GM12878 (cell line): ENCODE measurements at regions of chr7 and their contacts with region 1.

Region 1: GRCh38 chr7:100691676-100692577 is 2.1 kb downstream of the GIGYF1 start:
- DNase-seq: no peak
- ATAC-seq: peak; percentile 87
- H3K4me3 ChIP-seq: peak overlapping the region; percentile 95
- H3K27ac ChIP-seq: peak overlapping the region; percentile 74; the same call in 1 of the 2 replicates
- H3K4me1 ChIP-seq: peaks cover 41% of the 10 kb centered on the region
- H3K27me3 ChIP-seq: no peaks in the 10 kb centered on the region
- CTCF ChIP-seq: peak; percentile 85 to 90 (median 88)
- EP300 ChIP-seq: no peak
- POLR2A ChIP-seq: no peak
- RAD21 ChIP-seq: peak; percentile 83

Region 2: DNA sequence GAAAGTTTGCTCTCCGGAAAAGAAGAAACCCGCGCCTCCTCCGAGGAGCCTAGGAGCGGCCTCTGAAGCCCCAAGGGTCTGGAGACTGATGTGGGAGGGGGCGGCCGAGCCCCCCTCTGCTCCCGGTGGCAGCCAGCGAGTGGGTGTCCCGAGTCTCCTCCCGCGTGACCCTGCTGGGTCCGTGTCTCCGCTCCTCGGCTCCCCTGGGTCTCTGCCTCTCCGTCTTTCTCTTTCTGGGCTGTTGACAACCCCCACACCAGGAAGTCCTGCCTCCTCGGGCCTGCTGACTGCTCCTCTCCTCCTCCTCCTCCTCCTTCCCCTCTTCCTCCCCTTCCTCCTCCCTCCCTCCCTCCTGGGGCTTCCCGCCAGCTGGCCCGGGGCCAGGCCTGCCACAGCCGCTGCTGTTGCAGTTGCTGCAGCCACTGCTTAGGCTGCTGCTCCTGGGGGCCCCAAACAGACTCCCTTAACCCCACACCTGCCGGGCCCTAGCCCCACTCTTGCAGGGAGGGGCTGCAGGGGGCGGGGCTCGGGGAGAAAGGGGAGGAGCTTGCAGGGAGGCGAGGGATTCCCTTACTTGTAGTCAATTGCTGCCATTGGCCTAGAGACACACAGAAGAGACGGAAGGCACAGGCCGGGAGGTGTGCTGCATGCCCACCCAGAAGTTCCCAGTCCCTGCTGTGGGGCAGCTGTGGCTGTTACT is 212.8 kb before region 1 on chr7 and contains the start of gene TSC22D4:
- CTCF ChIA-PET with region 1: interaction called, 4 read pairs
- POLR2A ChIA-PET with region 1: no interaction called
- RAD21 ChIA-PET with region 1: interaction called, 3 read pairs
- SMC1A ChIA-PET with region 1: no interaction called
- in situ Hi-C with region 1: loop called (anchors 25 kb)
- intact Hi-C with region 1: loop called (anchors 10 kb)
- DNase-seq: peak; percentile 79
- ATAC-seq: peak; percentile 85
- H3K4me3 ChIP-seq: peak within 1 kb of the TSS; percentile 99
- H3K27ac ChIP-seq: peak within 1 kb of the TSS; percentile 89
- H3K4me1 ChIP-seq: peaks cover 27% of the 10 kb centered on the region
- H3K27me3 ChIP-seq: no peaks in the 10 kb centered on the region
- CTCF ChIP-seq: no peak
- EP300 ChIP-seq: no peak
- POLR2A ChIP-seq: peak; percentile 87
- RAD21 ChIP-seq: no peak
- polyA plus RNA-seq, gene TSC22D4: 0.50 to 1.2 TPM

Region 3: DNA sequence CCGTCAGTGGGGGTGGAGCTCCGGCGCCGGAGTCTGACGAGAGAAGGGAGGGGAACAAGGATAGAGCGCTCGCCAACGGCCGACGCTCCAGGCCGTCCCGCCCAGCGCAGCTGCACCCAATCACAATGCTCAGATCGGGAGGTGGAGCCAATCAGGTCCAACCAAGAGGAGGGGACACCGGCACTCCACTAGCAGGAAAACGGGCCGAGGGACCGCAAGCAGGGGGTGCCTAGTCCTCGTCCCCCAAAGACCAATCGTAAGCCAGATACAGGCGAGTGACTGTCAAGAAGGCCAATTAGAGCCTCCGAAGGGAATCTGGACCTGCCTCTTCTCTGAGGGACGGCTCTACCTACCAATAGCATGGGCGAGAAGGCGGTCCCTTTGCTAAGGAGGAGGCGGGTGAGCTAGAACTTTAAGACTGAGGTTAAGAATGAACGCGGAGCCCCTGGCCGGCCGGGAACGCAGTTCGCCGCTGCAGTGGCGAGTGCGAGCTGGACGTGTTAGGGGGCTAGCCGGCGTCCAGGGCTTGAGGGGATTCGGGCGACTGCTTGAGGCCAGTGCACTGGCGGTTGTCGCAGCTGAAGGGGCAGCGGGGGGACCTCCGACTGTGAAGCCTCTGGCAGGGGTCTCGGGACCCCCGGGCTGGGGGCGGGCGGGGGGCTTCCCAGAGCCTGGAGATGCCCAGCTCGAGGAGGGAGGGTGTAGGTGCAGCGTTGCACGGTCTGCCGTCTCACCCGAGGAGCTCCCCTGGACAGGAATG is 105.5 kb before region 1 on chr7 and contains the start of gene FBXO24:
- CTCF ChIA-PET with region 1: interaction called, 41 read pairs
- POLR2A ChIA-PET with region 1: interaction called, 6 read pairs
- RAD21 ChIA-PET with region 1: interaction called, 15 read pairs
- SMC1A ChIA-PET with region 1: interaction called, 13 read pairs
- in situ Hi-C with region 1: no loop called
- intact Hi-C with region 1: loop called (anchors 1 kb)
- DNase-seq: peak; percentile 100
- ATAC-seq: peak; percentile 90
- H3K4me3 ChIP-seq: peak within 1 kb of the TSS; percentile 83
- H3K27ac ChIP-seq: peak within 1 kb of the TSS; percentile 88
- H3K4me1 ChIP-seq: peaks cover 24% of the 10 kb centered on the region
- H3K27me3 ChIP-seq: no peaks in the 10 kb centered on the region
- CTCF ChIP-seq: no peak
- EP300 ChIP-seq: 0 out of 4 replicates have a peak, but pooled peaks of 1 of the 2 experiments have one; percentile 3
- POLR2A ChIP-seq: peak; percentile 53; the same call in 1 of the 2 replicates
- RAD21 ChIP-seq: no peak
- polyA plus RNA-seq, gene FBXO24: not detected

Region 4: GRCh38 chr7:100632951-100633717 is 58.8 kb before region 1 on chr7:
- CTCF ChIA-PET with region 1: interaction called, 46 read pairs
- POLR2A ChIA-PET with region 1: no interaction called
- RAD21 ChIA-PET with region 1: interaction called, 3 read pairs
- SMC1A ChIA-PET with region 1: interaction called, 5 read pairs
- in situ Hi-C with region 1: no loop called
- intact Hi-C with region 1: loop called (anchors 5 kb)
- DNase-seq: no peak
- ATAC-seq: peak; percentile 84
- H3K4me3 ChIP-seq: peak overlapping the region; percentile 76
- H3K27ac ChIP-seq: peak overlapping the region; percentile 24; the same call in 1 of the 2 replicates
- H3K4me1 ChIP-seq: peaks cover 6% of the 10 kb centered on the region
- H3K27me3 ChIP-seq: no peaks in the 10 kb centered on the region; a peak in 1 of 4 replicates
- CTCF ChIP-seq: peak; percentile 47 to 64 (median 48)
- EP300 ChIP-seq: no peak
- POLR2A ChIP-seq: peak; percentile 70
- RAD21 ChIP-seq: no peak

Region 5: DNA sequence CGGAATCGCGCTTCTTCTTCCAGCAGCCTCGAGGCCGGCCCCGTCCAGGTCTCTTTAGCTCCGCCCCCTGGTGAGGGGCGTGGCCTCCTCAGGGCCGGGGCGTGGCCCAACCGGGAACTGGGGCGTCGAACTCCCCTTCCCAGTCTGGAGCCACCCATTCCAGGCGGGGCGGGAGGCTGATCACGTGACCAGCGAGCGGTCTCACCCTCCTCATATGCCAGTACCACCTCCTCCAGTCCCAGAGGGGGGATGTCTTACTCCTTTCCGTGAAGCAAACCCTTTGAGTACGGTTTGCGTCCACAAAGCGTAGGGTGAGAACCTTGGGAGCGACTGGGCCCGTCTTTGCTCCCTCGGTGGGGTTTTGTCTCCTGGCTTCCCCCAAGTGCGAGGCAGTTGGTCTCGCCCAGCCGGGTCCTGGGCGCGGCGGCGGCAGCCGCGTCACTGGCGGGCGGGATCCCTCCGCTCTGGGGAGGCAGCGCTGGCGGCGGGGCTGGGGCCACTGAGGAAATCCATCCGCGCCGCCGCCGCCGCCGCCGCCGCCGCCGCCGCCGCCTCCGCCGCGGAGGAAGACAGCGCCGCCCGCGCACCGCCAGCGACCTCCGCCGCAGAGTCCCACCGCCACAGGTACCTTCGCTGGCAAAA is 18.5 kb before region 1 on chr7 and contains the start of gene GNB2:
- CTCF ChIA-PET with region 1: interaction called, 57 read pairs
- POLR2A ChIA-PET with region 1: interaction called, 3 read pairs
- RAD21 ChIA-PET with region 1: no interaction called
- SMC1A ChIA-PET with region 1: no interaction called
- in situ Hi-C with region 1: no loop called
- intact Hi-C with region 1: no loop called
- DNase-seq: peak; percentile 95
- ATAC-seq: peak; percentile 72
- H3K4me3 ChIP-seq: peak within 1 kb of the TSS; percentile 98
- H3K27ac ChIP-seq: peak within 1 kb of the TSS; percentile 92
- H3K4me1 ChIP-seq: no peaks in the 10 kb centered on the region; the same call in 1 of the 2 replicates
- H3K27me3 ChIP-seq: no peaks in the 10 kb centered on the region
- CTCF ChIP-seq: no peak
- EP300 ChIP-seq: 0 out of 4 replicates have a peak, but pooled peaks of 1 of the 2 experiments have one; percentile 37
- POLR2A ChIP-seq: peak; percentile 75
- RAD21 ChIP-seq: no peak
- polyA plus RNA-seq, gene GNB2: 0.35 to 4.7 TPM

Region 6: GRCh38 chr7:100852048-100852872 is 160.3 kb after region 1 on chr7 and contains the start of gene SLC12A9:
- CTCF ChIA-PET with region 1: interaction called, 18 read pairs
- POLR2A ChIA-PET with region 1: no interaction called
- RAD21 ChIA-PET with region 1: interaction called, 5 read pairs
- SMC1A ChIA-PET with region 1: interaction called, 5 read pairs
- in situ Hi-C with region 1: no loop called
- intact Hi-C with region 1: no loop called
- DNase-seq: peak; percentile 45
- ATAC-seq: peak; percentile 99
- H3K4me3 ChIP-seq: peak within 1 kb of the TSS; percentile 91
- H3K27ac ChIP-seq: peak within 1 kb of the TSS; percentile 13
- H3K4me1 ChIP-seq: peaks cover 2% of the 10 kb centered on the region
- H3K27me3 ChIP-seq: no peaks in the 10 kb centered on the region
- CTCF ChIP-seq: peak; percentile 88 to 95 (median 92)
- EP300 ChIP-seq: 0 out of 4 replicates have a peak, but pooled peaks of 1 of the 2 experiments have one; percentile 9
- POLR2A ChIP-seq: peak; percentile 71
- RAD21 ChIP-seq: peak; percentile 92
- polyA plus RNA-seq, gene SLC12A9: 0.24 to 0.35 TPM

Region 7: GRCh38 chr7:101169838-101170551 is 478.1 kb after region 1 on chr7:
- CTCF ChIA-PET with region 1: no interaction called
- POLR2A ChIA-PET with region 1: no interaction called
- RAD21 ChIA-PET with region 1: no interaction called
- SMC1A ChIA-PET with region 1: no interaction called
- in situ Hi-C with region 1: no loop called
- intact Hi-C with region 1: no loop called
- DNase-seq: no peak
- ATAC-seq: peak; percentile 75
- H3K4me3 ChIP-seq: no peak overlapping the region
- H3K27ac ChIP-seq: no peak overlapping the region
- H3K4me1 ChIP-seq: peaks cover 11% of the 10 kb centered on the region
- H3K27me3 ChIP-seq: peaks cover 33 to 36% of the 10 kb centered on the region in 2 experiments
- CTCF ChIP-seq: peak; percentile 92 to 97 (median 93)
- EP300 ChIP-seq: no peak
- POLR2A ChIP-seq: no peak
- RAD21 ChIP-seq: peak; percentile 63